Activated T-helper 1 cell treated with anti-CD3 and anti-CD28 coated beads, Interleukin-12 subunit alpha, Interleukin-12 subunit beta, Interleukin-2, Interleukin-4 antibody, amounts not matched to agents 30 ng/mL and 10 ng/mL and 1 ng/mL, durations not matched to agents 14 hours and 24 hours and 36 hours (primary cell): ENCODE measurements at regions of chr12 and their contacts with region 1.

Region 1: GRCh38 chr12:56224102-56224701 is at the start of gene NABP2:
- DNase-seq: peak; percentile 94
- H3K4me3 Mint-ChIP-seq: peak within 1 kb of the TSS; percentile 99
- H3K27ac Mint-ChIP-seq: peak within 1 kb of the TSS; percentile 81
- H3K4me1 Mint-ChIP-seq: peaks cover 51% of the 10 kb centered on the region
- H3K27me3 Mint-ChIP-seq: no peaks in the 10 kb centered on the region
- total RNA-seq, gene NABP2: 97.5 and 102 TPM in 2 replicates

Region 2: GRCh38 chr12:55817346-55818139 is 406.7 kb before region 1 on chr12 and contains the starts of genes ORMDL2 and SARNP:
- intact Hi-C with region 1: loop called (anchors 5 kb)
- DNase-seq: peak; percentile 97
- H3K4me3 Mint-ChIP-seq: no peak within 1 kb of the TSS
- H3K27ac Mint-ChIP-seq: no peak within 1 kb of the TSS
- H3K4me1 Mint-ChIP-seq: peaks cover 33% of the 10 kb centered on the region
- H3K27me3 Mint-ChIP-seq: no peaks in the 10 kb centered on the region
- total RNA-seq, gene ORMDL2: 58.9 and 61.2 TPM in 2 replicates
- total RNA-seq, gene SARNP: 70.7 and 75.1 TPM in 2 replicates

Region 3: DNA sequence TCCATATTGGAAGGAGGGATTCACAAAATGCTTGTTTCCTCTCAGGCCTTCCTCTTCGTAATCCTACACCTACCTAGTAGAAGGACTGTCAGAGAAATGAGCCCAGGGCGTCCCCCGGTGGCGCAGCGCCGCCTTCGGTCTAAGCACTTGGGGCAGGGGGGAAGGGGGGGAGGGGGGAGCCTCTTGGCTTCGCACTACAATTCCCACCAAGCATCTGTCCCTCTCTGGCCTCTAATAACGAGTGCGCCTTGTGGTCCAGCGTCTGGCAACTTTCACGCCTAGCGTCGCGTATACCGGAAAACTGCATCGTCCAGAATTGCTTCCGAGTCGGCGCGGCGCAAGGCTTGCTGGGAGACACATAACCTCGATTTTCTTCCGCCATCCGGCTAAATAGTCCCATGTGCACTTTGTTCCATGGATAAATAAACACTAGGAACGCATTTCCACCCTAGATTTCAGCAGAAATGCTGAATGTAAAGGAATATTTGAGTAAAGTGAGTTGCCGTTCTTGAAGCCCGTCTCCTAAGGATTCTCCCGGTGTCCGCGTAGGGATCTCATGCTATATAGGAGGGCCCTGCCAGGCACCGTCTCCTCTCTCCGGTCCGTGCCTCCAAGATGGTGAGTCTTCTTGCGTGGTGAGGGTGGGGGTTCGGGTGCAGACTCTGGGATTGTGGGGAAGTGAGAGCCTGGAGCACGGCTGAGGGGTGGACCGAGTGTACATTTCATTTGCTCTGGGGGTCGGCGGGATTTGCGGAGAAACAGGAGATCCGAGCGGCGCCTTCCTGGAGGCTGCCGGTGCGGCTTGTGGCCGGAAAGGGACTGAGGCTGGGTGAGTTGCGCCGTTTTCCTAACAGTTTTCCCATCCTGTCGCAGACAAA is 182.4 kb before region 1 on chr12 and contains the start of gene RPS26:
- intact Hi-C with region 1: loop called (anchors 5 kb)
- DNase-seq: peak; percentile 90
- H3K4me3 Mint-ChIP-seq: peak within 1 kb of the TSS; percentile 97
- H3K27ac Mint-ChIP-seq: peak within 1 kb of the TSS; percentile 97
- H3K4me1 Mint-ChIP-seq: peaks cover 49% of the 10 kb centered on the region
- H3K27me3 Mint-ChIP-seq: no peaks in the 10 kb centered on the region
- total RNA-seq, gene RPS26: 35.4 and 38.2 TPM in 2 replicates

Region 4: DNA sequence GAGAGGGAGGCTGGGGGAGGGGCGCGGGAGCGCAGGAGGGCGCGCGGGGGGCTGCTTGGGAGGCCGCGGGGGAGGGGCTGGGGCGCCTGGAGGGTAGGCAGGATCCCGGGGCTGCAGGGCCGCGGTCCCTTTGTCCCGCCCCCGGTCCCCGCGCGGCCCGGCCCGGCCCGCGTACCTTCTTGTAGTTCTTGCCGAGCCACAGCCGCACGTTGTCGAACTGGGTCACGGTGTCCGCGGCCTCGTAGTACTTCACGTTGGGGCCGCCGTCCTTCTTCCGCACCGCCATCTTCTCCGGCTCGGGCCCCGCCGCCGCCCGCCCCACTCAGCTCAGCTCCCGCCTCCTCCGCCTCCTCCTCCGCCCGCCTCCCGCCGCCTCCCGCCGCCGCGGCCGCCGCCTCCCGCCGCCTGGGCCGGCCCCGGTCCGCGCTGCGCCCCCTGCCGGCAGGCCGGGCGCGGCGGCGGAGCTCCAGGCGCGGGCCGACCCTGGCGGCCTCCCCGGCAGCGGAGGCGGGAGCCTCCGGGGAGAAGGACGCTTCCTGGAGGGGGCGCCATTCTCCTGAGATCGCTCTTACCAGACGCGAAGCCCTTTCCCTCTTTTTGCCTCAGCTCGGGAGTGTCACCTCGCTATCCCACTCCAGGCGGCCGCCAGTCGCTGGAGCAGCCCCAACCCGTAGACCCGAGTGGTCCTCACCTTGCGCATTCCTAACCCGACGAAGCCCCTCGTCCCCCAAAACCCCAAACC is 34.9 kb before region 1 on chr12 and contains the start of gene SMARCC2:
- intact Hi-C with region 1: loop called (anchors 1 kb)
- DNase-seq: peak; percentile 85
- H3K4me3 Mint-ChIP-seq: peak within 1 kb of the TSS; percentile 95
- H3K27ac Mint-ChIP-seq: peak within 1 kb of the TSS; percentile 96
- H3K4me1 Mint-ChIP-seq: peaks cover 55% of the 10 kb centered on the region
- H3K27me3 Mint-ChIP-seq: peaks cover 2% of the 10 kb centered on the region
- total RNA-seq, gene SMARCC2: 124 and 132 TPM in 2 replicates

Region 5: DNA sequence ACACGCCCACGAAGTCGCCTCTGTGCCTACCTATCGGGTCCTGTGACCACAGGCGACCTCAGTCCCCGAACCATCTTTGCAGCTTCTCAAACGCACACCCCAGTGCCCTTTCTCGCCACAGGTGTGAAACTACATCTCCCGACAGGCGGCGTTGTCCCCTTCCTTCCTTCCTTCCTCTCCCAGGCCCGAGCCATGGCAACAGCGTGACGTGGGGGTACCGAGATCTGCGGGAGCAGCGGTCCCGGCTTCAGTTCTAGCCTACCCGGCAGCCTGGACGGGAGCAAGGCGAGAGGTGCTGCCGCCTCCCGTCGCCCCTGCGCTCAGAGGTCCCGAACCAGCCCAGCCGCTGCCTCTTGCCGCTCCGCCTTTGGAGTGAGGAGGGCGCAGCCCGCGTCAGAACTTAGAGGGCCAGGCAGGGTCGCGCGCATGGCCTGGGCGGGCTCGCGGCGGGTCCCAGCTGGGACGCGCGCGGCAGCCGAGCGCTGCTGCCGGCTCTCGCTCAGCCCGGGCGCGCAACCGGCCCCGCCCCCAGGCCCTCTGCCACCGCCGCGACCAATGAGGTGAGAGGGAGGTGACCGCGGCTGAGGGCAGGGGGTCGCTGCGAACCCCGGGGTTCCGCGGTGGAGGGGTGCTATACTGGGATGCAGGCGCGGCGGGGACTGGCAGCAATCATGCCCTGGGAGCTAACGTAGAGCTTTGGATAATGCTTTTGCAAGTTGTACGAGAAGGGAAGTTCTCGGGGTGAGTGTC is 42.7 kb after region 1 on chr12 and contains the start of gene COQ10A:
- intact Hi-C with region 1: loop called (anchors 2 kb)
- DNase-seq: peak; percentile 84
- H3K4me3 Mint-ChIP-seq: peak within 1 kb of the TSS; percentile 96
- H3K27ac Mint-ChIP-seq: peak within 1 kb of the TSS; percentile 87
- H3K4me1 Mint-ChIP-seq: peaks cover 15% of the 10 kb centered on the region
- H3K27me3 Mint-ChIP-seq: no peaks in the 10 kb centered on the region
- total RNA-seq, gene COQ10A: 17.8 and 18.0 TPM in 2 replicates

Region 6: GRCh38 chr12:56333679-56334489 is 109.7 kb after region 1 on chr12 and contains the start of gene PAN2:
- intact Hi-C with region 1: loop called (anchors 1 kb)
- DNase-seq: peak; percentile 94
- H3K4me3 Mint-ChIP-seq: peak within 1 kb of the TSS; percentile 87
- H3K27ac Mint-ChIP-seq: peak within 1 kb of the TSS; percentile 100
- H3K4me1 Mint-ChIP-seq: peaks cover 42% of the 10 kb centered on the region
- H3K27me3 Mint-ChIP-seq: no peaks in the 10 kb centered on the region
- total RNA-seq, gene PAN2: 20.9 and 21.3 TPM in 2 replicates

Region 7: GRCh38 chr12:56468216-56469006 is 244.2 kb after region 1 on chr12 and contains the start of gene SPRYD4:
- intact Hi-C with region 1: loop called (anchors 1 kb)
- DNase-seq: peak; percentile 94
- H3K4me3 Mint-ChIP-seq: peak within 1 kb of the TSS; percentile 99
- H3K27ac Mint-ChIP-seq: peak within 1 kb of the TSS; percentile 98
- H3K4me1 Mint-ChIP-seq: peaks cover 19% of the 10 kb centered on the region
- H3K27me3 Mint-ChIP-seq: no peaks in the 10 kb centered on the region
- total RNA-seq, gene SPRYD4: 5.0 and 5.5 TPM in 2 replicates